GM18951 (cell line): ENCODE measurements at regions of chr6 and their contacts with region 1.

Region 1: GRCh38 chr6:30914076-30914853 is at the start of gene VARS2:
- POLR2A ChIP-seq: peak; percentile 81

Region 2: DNA sequence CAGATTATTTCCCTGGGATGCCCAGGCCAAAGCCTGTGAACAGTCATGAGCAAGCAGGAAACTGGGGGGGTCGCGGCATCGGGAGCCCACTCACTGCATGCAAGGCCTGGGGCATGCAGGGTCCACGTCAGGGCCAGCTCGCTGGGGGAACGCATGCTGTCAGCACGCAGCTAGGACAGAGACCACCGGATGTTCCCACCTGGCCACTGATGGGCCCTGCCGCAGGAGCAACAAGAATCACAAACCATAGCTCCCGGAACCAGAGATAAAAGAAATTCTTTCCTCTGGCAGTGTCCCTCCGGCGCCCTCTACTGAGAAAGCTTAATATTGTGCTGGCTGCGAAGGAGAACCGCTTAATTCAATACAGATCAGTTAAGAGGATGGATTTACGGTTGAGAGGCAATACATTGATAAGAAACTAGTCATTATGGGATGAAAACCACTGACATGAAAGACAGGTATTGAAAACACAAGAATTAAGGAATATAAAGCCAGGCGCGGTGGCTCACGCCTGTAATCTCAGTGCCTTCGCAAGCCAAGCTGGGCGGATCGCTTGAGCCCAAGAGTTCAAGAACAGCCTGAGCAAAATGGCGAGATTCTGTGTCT is 165.5 kb after region 1 on chr6:
- in situ Hi-C with region 1: loop called (anchors 10 kb)
- POLR2A ChIP-seq: no peak